ENCODE measurements at regions of chr1 and their contacts with region 1.

Region 1: DNA sequence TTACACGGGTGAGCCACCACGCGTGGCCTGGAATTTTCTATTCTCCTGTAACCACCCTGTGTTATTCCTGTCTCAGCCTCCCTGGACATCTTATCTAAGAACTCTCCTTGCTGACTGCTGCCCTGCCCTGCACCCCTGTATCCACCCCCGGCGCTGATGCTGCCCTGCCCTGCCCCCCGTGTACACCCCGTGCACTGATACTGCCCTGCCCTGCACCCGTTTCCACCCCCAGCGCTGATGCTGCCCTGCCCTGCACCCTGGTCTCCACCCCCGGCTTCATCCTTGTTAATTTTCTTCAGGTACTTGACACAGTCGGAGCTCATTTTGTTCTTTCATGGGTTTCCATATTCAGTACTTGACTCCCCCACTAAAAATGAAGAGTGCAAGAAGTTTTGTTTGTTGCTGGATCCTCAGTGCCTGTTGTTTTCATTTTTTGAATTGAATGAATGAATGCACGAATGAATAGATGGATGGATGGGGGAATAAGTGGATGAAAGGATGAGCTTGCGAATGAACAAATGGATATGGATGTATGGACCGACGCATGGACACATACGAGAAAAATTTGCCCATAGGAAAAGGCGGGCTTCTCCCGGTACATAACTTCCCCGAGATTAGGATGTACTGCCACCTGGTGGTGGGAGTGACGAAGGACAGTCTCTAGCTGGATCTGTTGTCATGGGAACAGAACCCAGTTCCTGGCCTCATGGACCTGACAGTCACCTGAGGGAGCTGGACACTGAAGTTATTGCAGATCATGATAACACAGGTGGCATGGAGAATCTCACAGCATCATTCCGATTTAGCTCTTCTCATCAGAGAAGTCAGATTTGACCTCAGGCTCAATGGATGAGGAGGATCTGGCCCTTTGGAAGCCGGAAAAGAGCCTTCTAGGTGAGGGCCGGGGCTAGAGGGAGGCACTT is 14.9 kb downstream of the AADACL4 start:
- DNase-seq: peak; percentile 53
- H3K4me3 Mint-ChIP-seq: peak overlapping the region; percentile 35
- H3K27ac Mint-ChIP-seq: no peak overlapping the region
- H3K4me1 Mint-ChIP-seq: peaks cover 7% of the 10 kb centered on the region
- H3K27me3 Mint-ChIP-seq: peaks cover 15% of the 10 kb centered on the region

Region 2: GRCh38 chr1:12275369-12275768 is 383.4 kb before region 1 on chr1:
- intact Hi-C with region 1: loop called (anchors 2 kb)
- DNase-seq: no peak
- H3K4me3 Mint-ChIP-seq: no peak overlapping the region
- H3K27ac Mint-ChIP-seq: no peak overlapping the region
- H3K4me1 Mint-ChIP-seq: no peaks in the 10 kb centered on the region
- H3K27me3 Mint-ChIP-seq: no peaks in the 10 kb centered on the region

Region 3: DNA sequence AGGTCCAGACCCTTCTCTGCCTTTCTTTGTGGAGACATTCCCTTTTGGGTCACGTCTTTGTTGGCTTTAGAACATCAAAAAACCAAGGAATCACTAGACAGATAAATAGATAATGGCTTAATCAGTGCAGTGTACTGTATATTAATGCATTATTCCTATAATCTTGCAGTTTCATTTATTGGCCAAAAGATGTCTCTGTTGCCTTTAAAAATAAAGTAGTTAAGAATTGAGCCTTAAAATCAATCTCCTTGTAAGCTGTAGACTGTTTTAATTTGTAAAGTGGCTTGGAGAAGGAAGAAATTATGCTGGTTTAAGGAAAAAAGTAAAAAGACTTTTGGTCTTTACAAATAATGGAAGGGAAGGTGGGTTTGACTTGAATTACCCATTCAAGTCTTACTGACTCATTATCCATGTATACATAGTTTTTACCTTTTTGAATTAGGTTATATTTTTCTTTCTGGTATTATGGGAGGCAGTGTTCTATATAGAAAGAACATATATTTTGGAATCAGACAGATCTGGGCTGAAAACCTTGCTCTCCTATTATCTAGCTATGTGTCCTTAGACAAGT is 344.4 kb before region 1 on chr1:
- intact Hi-C with region 1: loop called (anchors 1 kb)
- DNase-seq: no peak
- H3K4me3 Mint-ChIP-seq: no peak overlapping the region
- H3K27ac Mint-ChIP-seq: no peak overlapping the region
- H3K4me1 Mint-ChIP-seq: peaks cover 3% of the 10 kb centered on the region
- H3K27me3 Mint-ChIP-seq: no peaks in the 10 kb centered on the region

Region 4: DNA sequence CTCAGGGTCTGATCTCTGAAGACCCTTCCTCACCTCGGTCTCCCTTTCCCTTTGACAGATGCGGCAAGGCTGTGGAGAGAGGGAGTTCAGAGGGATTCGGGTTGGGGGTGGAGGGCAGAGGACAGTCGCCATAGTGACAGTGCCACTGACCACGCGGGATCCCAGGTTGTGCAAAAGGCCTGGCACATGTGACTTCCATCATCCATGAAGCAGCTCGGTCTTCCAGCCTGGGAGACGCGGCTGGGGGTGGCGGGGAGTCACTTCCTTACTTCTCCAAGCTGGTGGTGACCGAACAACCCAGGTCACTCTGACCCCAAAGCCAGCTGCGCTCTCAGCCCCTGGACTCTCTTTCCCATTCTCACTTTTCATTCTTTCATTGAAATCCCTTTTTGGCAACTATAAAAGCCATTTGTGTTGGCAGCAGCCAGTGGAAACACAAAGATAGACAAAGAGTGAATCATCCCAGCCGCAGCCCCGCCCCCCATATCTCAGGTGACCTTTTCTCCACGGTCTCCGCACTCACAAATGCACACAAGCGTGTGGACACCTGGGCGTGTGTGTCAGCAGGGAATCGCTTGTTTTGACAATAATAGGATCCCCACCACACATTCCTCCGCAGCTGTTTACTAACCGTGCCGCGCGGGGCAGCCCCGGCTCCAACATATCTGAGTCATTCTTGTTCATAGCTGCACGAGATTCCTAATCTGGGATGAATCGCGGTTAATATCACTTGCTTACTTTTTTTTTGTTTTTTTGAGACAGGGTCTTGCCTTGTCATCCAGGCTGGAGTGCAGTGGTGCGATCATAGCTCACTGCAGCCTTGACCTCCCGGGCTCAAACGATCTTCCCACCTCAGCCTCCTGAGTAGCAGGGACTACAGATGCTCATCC is 109.1 kb before region 1 on chr1:
- intact Hi-C with region 1: no loop called
- DNase-seq: no peak
- H3K4me3 Mint-ChIP-seq: no peak overlapping the region
- H3K27ac Mint-ChIP-seq: no peak overlapping the region
- H3K4me1 Mint-ChIP-seq: peaks cover 12% of the 10 kb centered on the region
- H3K27me3 Mint-ChIP-seq: no peaks in the 10 kb centered on the region

Region 5: GRCh38 chr1:12669529-12670068 is 10.8 kb after region 1 on chr1:
- intact Hi-C with region 1: no loop called
- DNase-seq: no peak
- H3K4me3 Mint-ChIP-seq: no peak overlapping the region
- H3K27ac Mint-ChIP-seq: no peak overlapping the region
- H3K4me1 Mint-ChIP-seq: no peaks in the 10 kb centered on the region
- H3K27me3 Mint-ChIP-seq: peaks cover 14% of the 10 kb centered on the region

Region 6: GRCh38 chr1:12692967-12693782 is 34.4 kb after region 1 on chr1:
- intact Hi-C with region 1: no loop called
- DNase-seq: no peak
- H3K4me3 Mint-ChIP-seq: no peak overlapping the region
- H3K27ac Mint-ChIP-seq: no peak overlapping the region
- H3K4me1 Mint-ChIP-seq: no peaks in the 10 kb centered on the region
- H3K27me3 Mint-ChIP-seq: peaks cover 8% of the 10 kb centered on the region